H1 (cell line): ENCODE measurements at regions of chr17 and their contacts with region 1.

Region 1: GRCh38 chr17:45247429-45248131 is 14.3 kb downstream of the SPATA32 start:
- DNase-seq: peak; percentile 94 to 97
- H3K4me3 ChIP-seq: peak overlapping the region; percentile 70 to 82 (median 74)
- H3K27ac ChIP-seq: peak overlapping the region; percentile 71
- H3K4me1 ChIP-seq: peaks cover 3 to 15% (median 12%) of the 10 kb centered on the region in 4 experiments
- H3K27me3 ChIP-seq: no peaks in the 10 kb centered on the region; a peak in 2 of 7 replicates
- CTCF ChIP-seq: no peak
- EP300 ChIP-seq: peak in 1 of 2 experiments; percentile 53; a peak in 1 of 3 replicates
- POLR2A ChIP-seq: peak in 1 of 2 experiments; percentile 81; a peak in 2 of 3 replicates
- RAD21 ChIP-seq: no peak

Region 2: GRCh38 chr17:45161019-45161825 is 86.4 kb before region 1 on chr17:
- CTCF ChIA-PET with region 1: no interaction called
- POLR2A ChIA-PET with region 1: interaction called, 14 read pairs
- DNase-seq: peak; percentile 99
- H3K4me3 ChIP-seq: peak overlapping the region; percentile 73 to 97 (median 88)
- H3K27ac ChIP-seq: peak overlapping the region; percentile 99
- H3K4me1 ChIP-seq: peaks cover 0 to 9% (median 3%) of the 10 kb centered on the region in 4 experiments; a peak in 3 of 7 replicates
- H3K27me3 ChIP-seq: no peaks in the 10 kb centered on the region
- CTCF ChIP-seq: peak in 1 of 3 experiments; percentile 52; a peak in 1 of 4 replicates
- EP300 ChIP-seq: 0 out of 3 replicates have a peak, but pooled peaks of 1 of the 2 experiments have one; percentile 21
- POLR2A ChIP-seq: peak; percentile 98 to 100
- RAD21 ChIP-seq: peak in 1 of 2 experiments; percentile 24; a peak in 1 of 4 replicates

Region 3: GRCh38 chr17:45197555-45198334 is 49.8 kb before region 1 on chr17:
- CTCF ChIA-PET with region 1: interaction called, 10 read pairs
- POLR2A ChIA-PET with region 1: interaction called, 5 read pairs
- DNase-seq: peak; percentile 90 to 100
- H3K4me3 ChIP-seq: peak overlapping the region in 1 of 4 experiments; percentile 35; a peak in 2 of 8 replicates
- H3K27ac ChIP-seq: no peak overlapping the region
- H3K4me1 ChIP-seq: peaks cover 2 to 9% (median 7%) of the 10 kb centered on the region in 4 experiments; a peak in 5 of 7 replicates
- H3K27me3 ChIP-seq: no peaks in the 10 kb centered on the region
- CTCF ChIP-seq: peak; percentile 97 to 99 (median 99)
- EP300 ChIP-seq: peak in 1 of 2 experiments; percentile 55; a peak in 1 of 3 replicates
- POLR2A ChIP-seq: 0 out of 3 replicates have a peak, but pooled peaks of 1 of the 2 experiments have one; percentile 48
- RAD21 ChIP-seq: peak; percentile 93 to 100

Region 4: DNA sequence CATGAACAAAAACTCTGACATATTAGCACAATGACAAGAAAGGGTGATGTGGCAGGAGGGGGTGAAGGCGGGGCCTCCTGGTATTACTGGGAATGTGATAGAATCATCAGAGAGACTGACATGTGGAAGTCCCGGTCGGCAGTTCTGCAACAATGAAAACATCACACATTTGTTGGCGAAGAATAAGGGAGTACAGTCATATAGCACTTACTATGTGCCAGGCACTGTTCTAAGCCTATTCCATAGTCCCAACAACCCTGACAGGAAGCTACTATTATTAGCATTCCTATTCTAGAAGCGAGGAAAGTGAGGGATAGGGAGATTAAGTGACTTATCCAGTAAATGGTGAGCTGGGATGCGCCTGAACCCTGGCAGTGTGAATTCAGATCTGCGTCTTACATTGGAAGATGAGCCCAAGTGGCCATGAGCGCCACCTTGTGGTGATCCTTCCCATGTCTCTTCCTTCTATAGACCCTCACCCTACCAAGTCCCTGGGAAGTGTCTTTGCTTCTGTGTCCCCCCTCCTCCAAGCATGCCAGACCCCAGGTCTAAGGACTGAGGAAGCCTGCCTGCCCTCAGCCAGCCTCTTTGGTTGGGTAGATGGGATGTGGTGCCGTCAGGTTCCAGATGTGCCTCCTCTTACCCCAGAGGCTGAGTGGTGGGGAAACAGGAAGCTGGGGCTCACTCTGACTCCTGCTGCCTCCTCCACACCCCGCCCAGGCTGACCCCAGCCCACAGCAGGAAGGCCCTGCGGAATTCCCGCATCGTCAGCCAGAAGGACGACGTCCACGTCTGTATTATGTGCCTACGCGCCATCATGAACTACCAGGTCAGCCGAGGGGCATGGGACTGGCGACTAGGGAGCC is 11.9 kb before region 1 on chr17:
- CTCF ChIA-PET with region 1: interaction called, 362 read pairs
- POLR2A ChIA-PET with region 1: interaction called, 17 read pairs
- DNase-seq: peak; percentile 80 to 92
- H3K4me3 ChIP-seq: 0 out of 8 replicates have a peak overlapping the region, but pooled peaks of 1 of the 4 experiments have one; percentile 12
- H3K27ac ChIP-seq: no peak overlapping the region
- H3K4me1 ChIP-seq: peaks cover 3 to 20% (median 10%) of the 10 kb centered on the region in 4 experiments
- H3K27me3 ChIP-seq: peaks cover 0 to 26% (median 12%) of the 10 kb centered on the region in 4 experiments; a peak in 6 of 7 replicates
- CTCF ChIP-seq: peak; percentile 81 to 95 (median 82)
- EP300 ChIP-seq: no peak
- POLR2A ChIP-seq: no peak
- RAD21 ChIP-seq: peak; percentile 47 to 63; a peak in 3 of 4 replicates

Region 5: GRCh38 chr17:45270828-45271418 is 23.3 kb after region 1 on chr17:
- CTCF ChIA-PET with region 1: interaction called, 85 read pairs
- POLR2A ChIA-PET with region 1: interaction called, 16 read pairs
- DNase-seq: peak in 1 of 2 experiments; percentile 91
- H3K4me3 ChIP-seq: no peak overlapping the region
- H3K27ac ChIP-seq: no peak overlapping the region
- H3K4me1 ChIP-seq: peaks cover 0 to 1% (median 0%) of the 10 kb centered on the region in 4 experiments; a peak in 1 of 7 replicates
- H3K27me3 ChIP-seq: no peaks in the 10 kb centered on the region
- CTCF ChIP-seq: peak; percentile 93 to 100 (median 96)
- EP300 ChIP-seq: no peak
- POLR2A ChIP-seq: no peak
- RAD21 ChIP-seq: peak; percentile 69 to 81

Region 6: GRCh38 chr17:45394913-45395568 is 147.5 kb after region 1 on chr17:
- CTCF ChIA-PET with region 1: interaction called, 11 read pairs
- POLR2A ChIA-PET with region 1: interaction called, 4 read pairs
- DNase-seq: peak; percentile 72 to 88
- H3K4me3 ChIP-seq: no peak overlapping the region; a peak in 1 of 8 replicates
- H3K27ac ChIP-seq: no peak overlapping the region
- H3K4me1 ChIP-seq: peaks cover 0 to 4% (median 3%) of the 10 kb centered on the region in 4 experiments; a peak in 4 of 7 replicates
- H3K27me3 ChIP-seq: peaks cover 0 to 2% (median 0%) of the 10 kb centered on the region in 4 experiments; a peak in 2 of 7 replicates
- CTCF ChIP-seq: peak; percentile 82 to 87 (median 87)
- EP300 ChIP-seq: no peak
- POLR2A ChIP-seq: peak in 1 of 2 experiments; percentile 39; a peak in 1 of 3 replicates
- RAD21 ChIP-seq: peak; percentile 87 to 89

Region 7: GRCh38 chr17:45666046-45666600 is 418.5 kb after region 1 on chr17:
- CTCF ChIA-PET with region 1: no interaction called
- POLR2A ChIA-PET with region 1: no interaction called
- DNase-seq: no peak
- H3K4me3 ChIP-seq: no peak overlapping the region
- H3K27ac ChIP-seq: no peak overlapping the region
- H3K4me1 ChIP-seq: no peaks in the 10 kb centered on the region
- H3K27me3 ChIP-seq: no peaks in the 10 kb centered on the region; a peak in 3 of 7 replicates
- CTCF ChIP-seq: peak; percentile 54 to 65 (median 54)
- EP300 ChIP-seq: no peak
- POLR2A ChIP-seq: no peak
- RAD21 ChIP-seq: peak; percentile 78